ENCODE measurements at regions of chr15 and their contacts with region 1.

Region 1: GRCh38 chr15:31326156-31326732 is 391 bp upstream of the KLF13 start:
- DNase-seq: peak; percentile 95 to 100 (median 99)
- ATAC-seq: peak; percentile 89 to 93 (median 92)
- H3K4me3 ChIP-seq: peak overlapping the region; percentile 42 to 96 (median 84)
- H3K27ac ChIP-seq: peak overlapping the region; percentile 98 to 100 (median 100)
- H3K4me1 ChIP-seq: peaks cover 0 to 50% (median 38%) of the 10 kb centered on the region in 12 donors
- H3K27me3 ChIP-seq: no peaks in the 10 kb centered on the region
- CTCF ChIP-seq: peak in 1 of 12 donors; percentile 5
- POLR2A ChIP-seq: peak; percentile 68 to 95

Region 2: GRCh38 chr15:31004220-31004733 is 322.0 kb before region 1 on chr15:
- intact Hi-C with region 1: loop called in 2 of 10 experiments (anchors 10 kb)
- DNase-seq: peak; percentile 55 to 80 (median 65)
- ATAC-seq: peak; percentile 55 to 96 (median 75)
- H3K4me3 ChIP-seq: peak overlapping the region in 1 of 12 donors; percentile 10
- H3K27ac ChIP-seq: peak overlapping the region in 11 of 12 donors; percentile 9 to 71 (median 51)
- H3K4me1 ChIP-seq: peaks cover 0 to 24% (median 6%) of the 10 kb centered on the region in 12 donors
- H3K27me3 ChIP-seq: no peaks in the 10 kb centered on the region
- CTCF ChIP-seq: no peak
- POLR2A ChIP-seq: no peak

Region 3: DNA sequence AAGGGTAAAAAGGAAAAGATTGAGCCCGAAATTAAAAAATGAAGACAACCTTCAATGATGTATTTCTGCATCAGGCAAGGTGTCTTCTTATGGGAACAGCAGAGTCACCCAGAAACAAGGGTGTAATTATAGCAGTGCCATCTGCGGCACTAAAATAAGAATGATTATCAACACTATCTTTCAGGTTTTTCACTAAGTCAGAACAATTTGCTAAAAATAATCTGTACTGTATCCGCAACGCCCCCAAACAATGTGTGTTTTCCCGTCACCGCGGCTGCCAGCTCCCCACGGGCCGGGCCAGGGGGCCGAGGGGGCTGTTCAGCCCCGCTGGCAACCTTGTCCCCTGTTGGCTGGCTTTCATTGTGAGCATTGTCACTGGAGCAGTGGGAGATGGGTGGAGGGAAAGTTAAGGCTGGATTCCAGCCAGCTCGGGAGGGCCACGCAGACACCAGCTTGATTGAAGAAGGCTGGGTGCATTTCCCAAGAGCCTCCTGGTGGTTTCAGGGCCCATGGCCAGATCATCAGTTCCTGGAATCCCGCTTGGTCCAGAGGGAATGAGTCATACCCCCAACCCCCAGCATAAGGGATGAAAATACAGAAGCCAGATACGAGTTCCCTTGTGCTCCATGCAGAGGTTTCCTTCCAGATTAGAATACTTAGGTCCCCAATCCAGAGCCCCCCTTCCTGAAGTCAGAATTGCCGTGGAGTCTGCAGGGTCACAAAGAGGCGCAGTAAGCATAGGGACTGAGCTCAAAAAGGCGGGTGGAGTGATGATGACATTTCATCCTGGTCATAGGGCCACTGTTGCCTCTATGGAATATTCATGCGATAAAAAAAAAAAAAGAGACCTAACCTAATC is 89.8 kb before region 1 on chr15:
- intact Hi-C with region 1: loop called in 6 of 10 experiments (anchors 2 to 5 kb)
- DNase-seq: peak; percentile 82 to 89 (median 84)
- ATAC-seq: peak; percentile 83 to 96 (median 94)
- H3K4me3 ChIP-seq: peak overlapping the region in 8 of 12 donors; percentile 4 to 31 (median 23)
- H3K27ac ChIP-seq: peak overlapping the region; percentile 83 to 96 (median 90)
- H3K4me1 ChIP-seq: peaks cover 5 to 53% (median 30%) of the 10 kb centered on the region in 12 donors
- H3K27me3 ChIP-seq: no peaks in the 10 kb centered on the region
- CTCF ChIP-seq: peak in 3 of 12 donors; percentile 5 to 28 (median 12)
- POLR2A ChIP-seq: no peak

Region 4: GRCh38 chr15:31298707-31299172 is 27.5 kb before region 1 on chr15:
- intact Hi-C with region 1: no loop called
- DNase-seq: peak in 2 of 5 donors; percentile 14 to 23
- ATAC-seq: no peak
- H3K4me3 ChIP-seq: no peak overlapping the region
- H3K27ac ChIP-seq: no peak overlapping the region
- H3K4me1 ChIP-seq: peaks cover 0 to 49% (median 32%) of the 10 kb centered on the region in 12 donors
- H3K27me3 ChIP-seq: no peaks in the 10 kb centered on the region
- CTCF ChIP-seq: no peak
- POLR2A ChIP-seq: no peak

Region 5: DNA sequence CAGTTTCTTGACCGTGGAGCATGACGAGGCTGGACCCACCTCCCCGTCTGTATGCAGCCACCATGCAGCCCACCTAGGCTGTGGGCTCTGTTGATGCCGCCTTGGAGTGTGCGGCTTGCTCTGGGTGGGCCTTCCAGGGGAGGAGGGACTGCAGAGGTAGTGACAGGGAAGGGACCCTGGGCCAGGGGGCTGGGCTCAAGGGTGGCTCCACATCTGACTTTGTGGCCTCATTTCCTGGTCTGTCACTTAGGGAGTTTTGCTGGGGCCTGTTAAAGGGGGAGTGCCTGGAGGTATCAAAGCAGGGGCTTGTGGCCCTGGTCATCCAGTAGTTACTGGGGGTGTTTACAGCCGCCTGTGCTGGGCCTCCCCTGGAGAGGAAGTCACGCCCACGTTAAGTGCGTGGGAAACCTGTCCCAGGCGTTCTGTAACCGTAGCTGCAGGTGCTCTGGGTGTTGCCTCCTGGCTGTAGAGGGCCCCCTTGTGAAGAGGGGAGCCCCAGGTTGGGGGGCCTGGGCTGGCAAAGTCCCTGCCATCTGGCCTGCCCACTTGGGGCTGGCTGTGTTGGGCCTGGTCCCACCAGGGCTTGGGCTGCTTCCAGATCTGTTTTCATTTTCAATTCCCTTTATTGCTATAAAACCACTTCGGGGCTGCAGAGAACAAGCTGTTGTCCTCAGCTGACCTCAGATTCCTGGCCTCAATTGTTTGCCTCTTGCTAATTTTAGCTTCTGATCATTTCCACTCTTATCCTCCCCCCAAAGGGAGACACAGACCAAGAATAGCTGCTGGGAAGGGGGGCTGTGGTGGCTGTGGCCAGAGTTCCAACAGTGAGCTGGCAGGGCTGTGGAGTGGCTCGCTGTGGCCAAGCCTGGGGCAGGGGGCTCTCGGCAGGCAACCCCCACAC is 26.9 kb after region 1 on chr15:
- intact Hi-C with region 1: loop called in 1 of 10 experiments (anchors 2 kb)
- DNase-seq: peak; percentile 75 to 90 (median 88)
- ATAC-seq: peak; percentile 85 to 91 (median 86)
- H3K4me3 ChIP-seq: peak overlapping the region in 10 of 12 donors; percentile 2 to 50 (median 34)
- H3K27ac ChIP-seq: peak overlapping the region; percentile 85 to 99 (median 94)
- H3K4me1 ChIP-seq: peaks cover 47 to 100% (median 100%) of the 10 kb centered on the region in 12 donors
- H3K27me3 ChIP-seq: no peaks in the 10 kb centered on the region
- CTCF ChIP-seq: peak in 1 of 12 donors; percentile 10
- POLR2A ChIP-seq: no peak

Region 6: DNA sequence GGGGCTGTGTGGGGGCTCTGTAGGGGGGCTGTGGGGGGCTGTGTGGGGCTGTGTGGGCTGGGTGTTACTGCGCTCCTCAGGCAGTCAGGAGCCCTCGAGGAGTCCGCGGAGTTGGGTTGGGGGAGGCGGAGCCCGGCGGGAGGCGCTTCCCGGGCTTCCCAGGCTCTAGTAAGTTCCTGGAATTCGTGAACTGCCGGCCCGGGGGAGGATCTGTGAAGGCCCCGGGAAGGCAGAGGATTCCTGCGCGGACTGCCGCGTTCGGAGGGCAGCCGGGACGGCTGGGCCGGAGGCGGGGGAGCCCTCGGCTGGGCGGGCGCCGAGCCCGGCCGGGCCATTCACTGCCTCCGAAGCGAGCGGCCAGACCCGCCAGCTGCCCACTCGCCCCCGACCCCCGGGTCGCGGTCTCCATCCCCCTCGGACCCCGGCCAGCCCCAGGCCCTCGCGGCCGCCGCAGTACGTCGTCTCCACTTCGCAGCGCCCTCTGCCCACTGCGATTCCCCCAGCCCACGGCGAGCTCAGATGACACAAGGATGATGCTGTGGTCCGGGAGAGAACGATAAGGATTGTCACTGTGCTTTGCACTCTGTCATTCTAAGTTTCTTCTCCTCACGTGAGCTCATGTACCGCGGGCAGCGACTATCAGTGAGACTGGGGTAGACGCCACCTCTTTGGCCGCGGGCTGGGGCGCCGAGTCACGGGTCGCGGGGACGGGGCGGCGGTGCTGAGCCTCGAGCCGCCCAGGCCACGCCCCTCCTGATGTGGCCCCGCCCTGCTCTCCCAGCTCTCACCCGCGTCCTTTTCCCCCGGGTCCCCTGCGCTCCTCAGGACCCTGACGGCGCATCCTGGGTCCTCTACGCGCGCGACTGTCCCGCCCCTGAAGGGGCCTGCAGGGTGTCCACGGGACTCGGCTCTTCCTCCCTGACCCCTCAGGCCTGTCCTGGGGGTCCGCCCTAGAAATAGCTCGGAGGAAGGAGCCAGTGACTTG is 65.7 kb after region 1 on chr15:
- intact Hi-C with region 1: loop called in 7 of 10 experiments (anchors 1 to 5 kb)
- DNase-seq: peak; percentile 81 to 93 (median 90)
- ATAC-seq: peak; percentile 48 to 85 (median 80)
- H3K4me3 ChIP-seq: peak overlapping the region; percentile 57 to 88 (median 75)
- H3K27ac ChIP-seq: peak overlapping the region; percentile 92 to 99 (median 96)
- H3K4me1 ChIP-seq: peaks cover 0 to 33% (median 20%) of the 10 kb centered on the region in 12 donors
- H3K27me3 ChIP-seq: no peaks in the 10 kb centered on the region
- CTCF ChIP-seq: peak in 2 of 12 donors; percentile 9 to 13
- POLR2A ChIP-seq: peak; percentile 32 to 91

Region 7: DNA sequence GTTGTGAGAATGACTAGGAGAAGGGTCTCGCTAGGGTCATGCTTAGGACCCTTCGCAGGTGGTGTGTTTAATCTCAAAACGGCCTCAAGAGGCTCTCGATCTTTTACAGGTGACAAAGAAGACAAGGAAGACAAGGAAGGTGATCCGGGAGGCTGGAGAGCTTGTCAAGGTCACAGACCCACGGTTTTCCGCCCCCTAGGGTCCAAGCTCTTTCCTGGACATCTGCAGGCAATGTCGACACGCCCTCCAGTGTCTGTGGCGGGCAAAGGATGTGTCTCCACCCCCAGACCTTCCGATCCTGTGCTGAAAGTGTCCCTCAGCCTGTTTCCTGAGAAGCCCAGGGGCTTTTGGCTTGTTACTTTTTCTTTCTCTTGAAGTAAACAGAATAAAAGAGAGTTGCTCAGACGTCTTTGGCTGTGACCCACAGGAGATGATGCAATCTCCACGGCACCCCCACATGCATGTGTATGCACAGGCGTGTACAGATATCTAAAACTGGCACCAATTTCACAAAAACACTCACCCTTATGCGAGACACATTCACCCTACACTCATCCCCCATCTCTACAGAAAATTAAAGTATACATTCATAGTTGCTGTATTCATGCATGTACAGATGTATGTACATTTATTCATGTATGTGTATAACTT is 109.1 kb after region 1 on chr15:
- intact Hi-C with region 1: loop called in 7 of 10 experiments (anchors 2 to 5 kb)
- DNase-seq: peak; percentile 78 to 90 (median 86)
- ATAC-seq: peak; percentile 82 to 92 (median 86)
- H3K4me3 ChIP-seq: peak overlapping the region in 9 of 12 donors; percentile 8 to 54 (median 30)
- H3K27ac ChIP-seq: peak overlapping the region; percentile 50 to 94 (median 68)
- H3K4me1 ChIP-seq: peaks cover 0 to 52% (median 21%) of the 10 kb centered on the region in 12 donors
- H3K27me3 ChIP-seq: no peaks in the 10 kb centered on the region
- CTCF ChIP-seq: peak; percentile 58 to 95 (median 80)
- POLR2A ChIP-seq: peak in 1 of 2 donors; percentile 10

Region 8: DNA sequence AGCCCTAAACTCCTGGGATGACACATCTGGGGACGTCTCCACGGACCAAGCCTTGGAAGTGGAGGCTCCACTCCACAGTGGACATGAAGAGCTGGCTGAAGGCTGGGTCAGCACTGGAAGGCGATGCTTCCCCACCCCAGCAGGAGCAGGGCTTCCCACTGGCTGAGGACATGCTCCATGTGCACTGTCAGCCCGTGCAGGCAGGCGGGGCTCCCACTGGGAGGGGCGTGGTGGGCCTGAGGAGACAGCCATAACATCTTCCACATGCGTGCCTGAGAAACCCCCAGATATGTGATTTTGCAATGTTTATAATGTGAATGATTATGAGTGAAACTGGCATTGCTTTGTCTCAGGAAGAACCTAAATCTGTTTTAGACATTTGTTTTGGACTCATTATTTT is 231.7 kb after region 1 on chr15:
- intact Hi-C with region 1: no loop called
- DNase-seq: no peak
- ATAC-seq: no peak
- H3K4me3 ChIP-seq: no peak overlapping the region
- H3K27ac ChIP-seq: no peak overlapping the region
- H3K4me1 ChIP-seq: peaks cover 0 to 19% (median 11%) of the 10 kb centered on the region in 12 donors
- H3K27me3 ChIP-seq: no peaks in the 10 kb centered on the region
- CTCF ChIP-seq: no peak
- POLR2A ChIP-seq: no peak

Region 9: DNA sequence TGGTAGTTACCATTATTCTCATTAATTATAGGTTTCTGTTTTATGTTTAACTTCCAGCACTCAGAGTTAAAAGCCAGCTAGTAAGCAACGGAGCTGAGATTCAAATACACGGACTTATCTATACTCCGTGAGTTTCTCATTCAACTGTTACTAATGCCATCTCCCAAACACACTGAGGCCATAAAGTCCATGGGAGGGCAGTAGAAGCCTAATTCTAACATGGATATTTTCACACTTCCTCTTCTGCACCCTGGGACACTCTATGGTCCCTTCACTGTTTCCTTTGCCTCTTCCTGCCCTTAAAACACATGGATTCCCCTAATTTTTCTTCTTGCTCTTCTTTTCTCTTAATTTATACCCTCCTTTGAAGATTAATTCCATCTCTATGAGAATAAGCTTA is 245.4 kb after region 1 on chr15:
- intact Hi-C with region 1: no loop called
- DNase-seq: no peak
- ATAC-seq: peak in 2 of 4 donors; percentile 52 to 60
- H3K4me3 ChIP-seq: no peak overlapping the region
- H3K27ac ChIP-seq: no peak overlapping the region
- H3K4me1 ChIP-seq: peaks cover 0 to 9% (median 0%) of the 10 kb centered on the region in 12 donors
- H3K27me3 ChIP-seq: no peaks in the 10 kb centered on the region
- CTCF ChIP-seq: peak in 6 of 12 donors; percentile 8 to 49 (median 22)
- POLR2A ChIP-seq: no peak